PC-3 (cell line): ENCODE measurements at regions of chr20 and their contacts with region 1.

Region 1: DNA sequence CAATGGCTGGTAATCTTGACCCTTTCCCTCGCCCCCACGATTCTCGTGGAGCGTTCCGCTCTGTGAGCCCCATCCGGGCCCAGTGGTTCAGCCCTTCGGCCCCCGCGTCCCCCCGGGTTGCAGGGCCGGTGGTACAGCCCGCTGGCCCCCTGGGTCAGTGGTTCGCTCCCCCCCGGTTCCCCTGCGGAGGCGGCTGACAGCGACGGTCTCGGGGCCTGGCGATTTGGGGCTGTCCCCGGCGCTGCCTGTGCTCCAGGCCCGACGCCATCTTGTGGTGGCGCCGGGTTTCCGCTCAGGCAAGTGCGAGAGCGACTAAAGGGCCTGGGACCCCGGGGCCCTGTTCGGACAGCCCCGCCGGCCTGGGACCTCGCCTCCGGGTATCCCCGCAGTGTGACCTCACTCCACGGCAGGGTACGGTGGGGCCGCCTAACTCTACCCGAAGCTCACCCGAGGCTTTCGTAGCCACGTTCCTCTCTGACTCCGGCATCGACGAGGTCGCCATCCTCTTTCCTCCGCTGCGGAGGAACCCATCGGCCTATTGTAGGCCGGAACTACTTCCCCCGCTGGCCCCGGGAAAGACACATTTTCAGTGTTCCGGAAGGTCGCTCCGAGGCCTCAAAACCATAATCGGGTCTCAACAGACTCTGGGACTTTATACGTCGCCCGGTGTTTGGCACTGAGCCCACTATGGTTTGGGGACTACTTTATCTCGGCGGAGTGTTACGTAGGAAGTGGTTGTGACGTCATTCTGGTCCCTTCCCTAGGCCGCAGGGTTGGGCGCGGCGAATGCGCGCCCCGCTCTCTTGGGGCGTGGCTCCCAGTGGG is at the start of gene ZNF335:
- DNase-seq: peak; percentile 95
- ATAC-seq: peak; percentile 65
- H3K4me3 ChIP-seq: peak within 1 kb of the TSS; percentile 76
- H3K27ac ChIP-seq: peak within 1 kb of the TSS; percentile 98
- H3K4me1 ChIP-seq: peaks cover 34% of the 10 kb centered on the region
- H3K27me3 ChIP-seq: no peaks in the 10 kb centered on the region
- CTCF ChIP-seq: no peak
- total RNA-seq, gene ZNF335: 32.2 and 36.9 TPM in 2 replicates

Region 2: GRCh38 chr20:45905505-45906079 is 66.3 kb before region 1 on chr20:
- CTCF ChIA-PET with region 1: no interaction called
- POLR2A ChIA-PET with region 1: no interaction called
- intact Hi-C with region 1: no loop called
- DNase-seq: peak; percentile 99
- ATAC-seq: peak; percentile 93
- H3K4me3 ChIP-seq: no peak overlapping the region
- H3K27ac ChIP-seq: peak overlapping the region; percentile 73
- H3K4me1 ChIP-seq: peaks cover 17% of the 10 kb centered on the region
- H3K27me3 ChIP-seq: no peaks in the 10 kb centered on the region
- CTCF ChIP-seq: no peak

Region 3: GRCh38 chr20:45987108-45987780 is 15.4 kb after region 1 on chr20:
- CTCF ChIA-PET with region 1: interaction called, 11 read pairs
- POLR2A ChIA-PET with region 1: interaction called, 13 read pairs
- intact Hi-C with region 1: no loop called
- DNase-seq: peak; percentile 87
- ATAC-seq: peak; percentile 99
- H3K4me3 ChIP-seq: no peak overlapping the region
- H3K27ac ChIP-seq: no peak overlapping the region
- H3K4me1 ChIP-seq: peaks cover 8% of the 10 kb centered on the region
- H3K27me3 ChIP-seq: no peaks in the 10 kb centered on the region
- CTCF ChIP-seq: peak; percentile 98

Region 4: DNA sequence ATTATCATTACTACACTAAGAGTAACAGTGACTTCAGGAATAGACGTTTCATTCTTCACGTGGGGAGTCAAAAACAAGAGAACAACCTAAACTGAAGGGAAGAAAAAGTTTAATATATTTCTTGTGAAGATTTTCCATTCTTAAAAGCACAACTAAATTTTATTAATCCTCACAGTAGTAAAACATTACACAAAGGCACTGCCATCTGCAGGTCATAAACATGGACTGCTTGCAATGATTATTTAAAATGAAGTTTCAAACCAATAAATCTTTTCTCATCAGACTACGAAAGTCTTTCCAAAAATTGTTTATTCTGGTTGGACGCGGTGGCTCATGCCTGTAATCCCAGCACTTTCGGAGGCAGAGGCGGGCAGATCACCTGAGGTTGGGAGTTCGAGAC is 115.3 kb after region 1 on chr20:
- CTCF ChIA-PET with region 1: no interaction called
- POLR2A ChIA-PET with region 1: no interaction called
- intact Hi-C with region 1: loop called (anchors 1 kb)
- DNase-seq: peak; percentile 41
- ATAC-seq: no peak
- H3K4me3 ChIP-seq: peak overlapping the region; percentile 44; the same call in 1 of the 2 replicates
- H3K27ac ChIP-seq: no peak overlapping the region
- H3K4me1 ChIP-seq: peaks cover 38% of the 10 kb centered on the region
- H3K27me3 ChIP-seq: no peaks in the 10 kb centered on the region
- CTCF ChIP-seq: peak; percentile 67